Breast epithelium (tissue), 4 donors: ENCODE measurements at regions of chr21 and their contacts with region 1.

Region 1: DNA sequence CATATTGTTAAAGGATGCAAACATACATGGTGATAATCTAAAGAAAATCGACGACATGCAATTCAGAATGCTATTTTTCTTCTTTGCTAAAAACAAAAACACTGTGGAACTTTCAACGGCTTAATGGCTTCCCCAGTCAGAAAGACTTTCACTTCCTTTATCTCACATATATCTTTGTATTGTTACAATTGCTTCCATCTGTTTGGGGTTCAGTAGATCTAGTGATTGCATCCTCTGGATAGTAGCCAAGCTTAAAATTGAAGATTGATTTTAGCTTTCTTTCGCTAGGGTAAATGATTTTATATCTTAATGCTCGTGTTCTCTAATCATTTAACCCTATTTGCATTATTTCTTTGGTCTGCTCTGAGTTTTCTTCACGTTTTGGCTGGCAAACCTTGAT is 31.8 kb upstream of the ADAMTS1 start:
- DNase-seq: no peak
- H3K4me3 ChIP-seq: no peak overlapping the region
- H3K27ac ChIP-seq: no peak overlapping the region
- H3K4me1 ChIP-seq: no peaks in the 10 kb centered on the region
- H3K27me3 ChIP-seq: no peaks in the 10 kb centered on the region
- CTCF ChIP-seq: no peak
- POLR2A ChIP-seq: no peak

Region 2: DNA sequence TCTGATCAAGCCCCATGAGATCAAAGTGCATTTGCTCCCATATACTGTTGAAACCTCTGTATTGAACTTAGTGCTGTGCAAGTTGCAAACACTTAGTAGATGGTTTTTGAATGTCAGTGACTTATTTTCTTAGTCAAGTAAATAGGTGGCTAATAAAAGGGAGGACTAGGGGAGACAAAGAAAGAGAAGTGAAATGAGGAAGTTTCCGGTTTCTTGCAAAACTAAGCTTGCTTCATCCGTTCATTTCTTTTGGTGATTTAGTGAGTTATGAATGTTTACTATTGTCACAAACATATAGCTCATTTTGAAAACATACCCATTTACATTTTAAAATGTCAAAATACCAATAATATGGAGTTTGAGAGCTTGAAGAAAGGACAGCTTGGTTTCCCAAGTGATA is 66.9 kb after region 1 on chr21:
- intact Hi-C with region 1: loop called (anchors 2 kb)
- DNase-seq: no peak
- H3K4me3 ChIP-seq: no peak overlapping the region
- H3K27ac ChIP-seq: no peak overlapping the region
- H3K4me1 ChIP-seq: peaks cover 0 to 11% of the 10 kb centered on the region in 2 donors
- H3K27me3 ChIP-seq: no peaks in the 10 kb centered on the region
- CTCF ChIP-seq: no peak
- POLR2A ChIP-seq: no peak

Region 3: DNA sequence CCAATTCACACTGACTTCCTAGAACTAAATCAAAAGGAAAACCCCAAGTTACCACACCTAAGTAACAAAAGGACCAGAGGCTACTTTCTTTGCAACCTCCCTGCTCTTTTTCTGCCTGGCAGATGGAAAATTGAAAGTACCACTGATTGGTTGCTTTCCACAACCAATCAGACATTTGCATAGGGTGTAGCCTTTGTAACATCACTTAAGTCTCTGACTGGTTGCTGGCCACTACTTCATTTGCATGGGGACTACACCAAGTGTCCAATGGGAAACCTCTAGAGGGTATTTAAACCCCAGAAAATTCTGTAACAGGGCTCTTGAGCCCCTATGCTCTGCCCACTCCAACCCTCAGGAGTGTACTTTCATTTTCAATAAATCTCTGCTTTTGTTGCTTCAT is 1750.7 kb after region 1 on chr21:
- intact Hi-C with region 1: loop called (anchors 5 kb)
- DNase-seq: no peak
- H3K4me3 ChIP-seq: peak overlapping the region in 1 of 3 donors; percentile 6
- H3K27ac ChIP-seq: no peak overlapping the region
- H3K4me1 ChIP-seq: no peaks in the 10 kb centered on the region
- H3K27me3 ChIP-seq: no peaks in the 10 kb centered on the region
- CTCF ChIP-seq: no peak
- POLR2A ChIP-seq: no peak